ENCODE measurements at regions of chr16 and their contacts with region 1.

Region 1: DNA sequence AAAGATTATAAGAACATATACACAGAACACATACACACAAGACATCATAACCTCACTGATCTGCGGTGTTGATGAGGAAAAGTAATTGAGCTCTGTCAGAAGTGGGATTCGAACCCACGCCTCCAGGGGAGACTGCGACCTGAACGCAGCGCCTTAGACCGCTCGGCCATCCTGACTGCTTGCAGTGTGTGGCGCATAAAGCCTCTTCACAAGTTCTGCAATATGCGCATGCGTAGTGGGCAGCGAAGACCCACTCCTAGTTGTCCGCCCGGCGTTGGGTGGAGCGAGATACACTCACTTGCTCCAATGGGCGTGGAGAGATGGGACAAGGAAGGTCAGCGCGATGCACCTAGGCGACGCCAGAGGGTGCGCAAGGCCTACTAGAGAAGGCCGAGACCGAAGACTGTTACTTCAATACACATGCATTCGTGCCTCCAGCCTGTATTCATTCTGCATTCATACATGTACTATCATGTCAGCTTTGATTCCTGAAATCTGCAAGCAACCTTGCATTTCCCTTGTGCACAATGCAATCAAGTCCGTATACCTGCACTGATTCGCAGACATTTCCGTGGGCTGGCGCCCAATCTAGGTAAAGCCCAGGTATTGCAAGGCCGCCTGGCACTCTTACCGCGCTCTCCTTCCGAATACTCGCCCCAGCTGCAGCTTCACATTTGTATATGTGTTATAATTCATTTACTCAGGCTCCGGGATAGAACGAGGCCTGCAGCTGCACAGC is 16.1 kb upstream of the PLLP start:
- DNase-seq: peak; percentile 97
- ATAC-seq: peak; percentile 78
- H3K4me3 ChIP-seq: peak overlapping the region; percentile 85
- H3K27ac ChIP-seq: peak overlapping the region; percentile 28; the same call in 1 of the 2 replicates
- H3K4me1 ChIP-seq: peaks cover 18% of the 10 kb centered on the region
- H3K27me3 ChIP-seq: no peaks in the 10 kb centered on the region
- CTCF ChIP-seq: peak; percentile 86

Region 2: GRCh38 chr16:57084257-57084770 is 216.2 kb before region 1 on chr16:
- CTCF ChIA-PET with region 1: no interaction called
- POLR2A ChIA-PET with region 1: no interaction called
- intact Hi-C with region 1: loop called (anchors 1 kb)
- DNase-seq: peak; percentile 71
- ATAC-seq: peak; percentile 58
- H3K4me3 ChIP-seq: no peak overlapping the region
- H3K27ac ChIP-seq: no peak overlapping the region
- H3K4me1 ChIP-seq: no peaks in the 10 kb centered on the region
- H3K27me3 ChIP-seq: no peaks in the 10 kb centered on the region
- CTCF ChIP-seq: peak; percentile 87

Region 3: DNA sequence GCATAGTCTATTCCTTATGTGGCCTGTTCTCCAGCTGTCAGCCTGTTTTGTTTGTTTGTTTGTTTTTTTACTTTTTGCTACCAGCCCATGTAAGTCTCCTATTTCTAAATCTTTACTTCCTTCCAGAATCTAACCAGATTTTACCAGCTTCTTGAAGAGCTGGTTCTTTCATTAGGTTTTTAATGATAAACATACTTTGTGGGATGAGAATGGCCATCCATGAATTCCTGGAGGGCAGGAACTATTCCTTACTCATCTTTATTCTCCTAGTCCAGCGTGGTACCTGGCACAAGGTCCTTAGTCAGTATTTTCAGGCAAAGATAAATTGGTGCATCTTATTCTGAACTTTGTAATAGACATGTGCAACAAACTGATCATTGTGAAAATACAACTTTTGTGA is 97.1 kb before region 1 on chr16:
- CTCF ChIA-PET with region 1: no interaction called
- POLR2A ChIA-PET with region 1: no interaction called
- intact Hi-C with region 1: no loop called
- DNase-seq: no peak
- ATAC-seq: no peak
- H3K4me3 ChIP-seq: no peak overlapping the region
- H3K27ac ChIP-seq: no peak overlapping the region
- H3K4me1 ChIP-seq: no peaks in the 10 kb centered on the region
- H3K27me3 ChIP-seq: no peaks in the 10 kb centered on the region
- CTCF ChIP-seq: no peak

Region 4: GRCh38 chr16:57244767-57245471 is 55.6 kb before region 1 on chr16 and contains the start of gene ARL2BP:
- CTCF ChIA-PET with region 1: interaction called, 3 read pairs
- POLR2A ChIA-PET with region 1: no interaction called
- intact Hi-C with region 1: loop called (anchors 1 kb)
- DNase-seq: peak; percentile 95
- ATAC-seq: peak; percentile 97
- H3K4me3 ChIP-seq: peak within 1 kb of the TSS; percentile 79
- H3K27ac ChIP-seq: peak within 1 kb of the TSS; percentile 37
- H3K4me1 ChIP-seq: peaks cover 12% of the 10 kb centered on the region; the same call in 1 of the 2 replicates
- H3K27me3 ChIP-seq: no peaks in the 10 kb centered on the region
- CTCF ChIP-seq: peak; percentile 42
- total RNA-seq, gene ARL2BP: 35.3 and 38.4 TPM in 2 replicates

Region 5: DNA sequence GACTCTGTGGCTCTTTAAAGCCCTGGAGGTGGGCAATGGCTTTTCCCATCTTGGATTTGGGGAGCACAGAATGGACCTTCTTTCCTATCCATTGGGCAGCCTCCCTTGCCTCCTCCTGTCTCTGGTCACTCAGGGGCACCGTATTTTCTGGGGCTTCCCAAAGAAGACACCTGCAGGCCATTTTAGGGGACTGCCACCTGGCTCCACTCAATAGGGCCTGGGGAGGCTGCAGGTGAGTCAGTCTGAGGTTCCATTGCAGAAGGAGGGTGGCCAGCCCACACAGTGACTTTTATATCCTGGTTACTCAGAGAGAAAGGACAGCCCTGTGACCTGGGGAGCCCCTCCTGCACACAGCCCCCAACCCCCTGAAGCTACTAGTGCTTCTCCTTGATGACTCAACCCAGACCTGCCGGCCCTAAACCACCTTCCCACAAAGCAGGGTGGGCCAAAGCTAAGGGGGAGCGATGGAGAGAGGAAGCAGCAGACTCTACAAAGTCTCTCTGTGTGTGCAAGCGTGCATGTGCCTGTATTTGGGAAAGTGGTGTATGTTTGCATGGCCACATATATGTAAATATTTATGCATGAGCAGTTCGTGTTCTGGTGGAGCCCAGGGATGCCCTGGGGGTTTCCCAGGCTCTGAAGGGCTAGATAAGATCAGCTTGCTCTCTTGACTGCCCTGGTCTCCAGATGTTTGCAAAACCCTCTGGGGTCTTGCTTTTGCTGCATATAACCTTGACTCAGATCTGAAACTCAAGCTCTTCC is 76.7 kb after region 1 on chr16:
- CTCF ChIA-PET with region 1: interaction called, 4 read pairs
- POLR2A ChIA-PET with region 1: no interaction called
- intact Hi-C with region 1: loop called (anchors 5 kb)
- DNase-seq: peak; percentile 73
- ATAC-seq: peak; percentile 56
- H3K4me3 ChIP-seq: peak overlapping the region; percentile 29; the same call in 1 of the 2 replicates
- H3K27ac ChIP-seq: peak overlapping the region; percentile 97
- H3K4me1 ChIP-seq: peaks cover 20% of the 10 kb centered on the region
- H3K27me3 ChIP-seq: no peaks in the 10 kb centered on the region
- CTCF ChIP-seq: peak; percentile 45

Region 6: GRCh38 chr16:57422026-57422944 is 121.7 kb after region 1 on chr16:
- CTCF ChIA-PET with region 1: interaction called, 6 read pairs
- POLR2A ChIA-PET with region 1: interaction called, 7 read pairs
- intact Hi-C with region 1: loop called (anchors 1 kb)
- DNase-seq: peak; percentile 69
- ATAC-seq: peak; percentile 55
- H3K4me3 ChIP-seq: no peak overlapping the region
- H3K27ac ChIP-seq: no peak overlapping the region
- H3K4me1 ChIP-seq: peaks cover 5% of the 10 kb centered on the region
- H3K27me3 ChIP-seq: no peaks in the 10 kb centered on the region
- CTCF ChIP-seq: peak; percentile 79